Endothelial cell of umbilical vein (primary cell): ENCODE measurements at regions of chr14 and their contacts with region 1.

Region 1: GRCh38 chr14:68458840-68459469 is 333.9 kb downstream of the ZFP36L1 start:
- DNase-seq: peak; percentile 98
- H3K4me3 ChIP-seq: no peak overlapping the region
- H3K27ac ChIP-seq: peak overlapping the region; percentile 85
- H3K4me1 ChIP-seq: peaks cover 30% of the 10 kb centered on the region
- H3K27me3 ChIP-seq: no peaks in the 10 kb centered on the region
- CTCF ChIP-seq: no peak
- POLR2A ChIP-seq: peak; percentile 23

Region 2: GRCh38 chr14:68297876-68298469 is 161.0 kb before region 1 on chr14:
- CTCF ChIA-PET with region 1: interaction called, 14 read pairs
- POLR2A ChIA-PET with region 1: interaction called, 3 read pairs
- dilution Hi-C with region 1: no loop called
- intact Hi-C with region 1: no loop called
- DNase-seq: peak; percentile 58
- H3K4me3 ChIP-seq: no peak overlapping the region
- H3K27ac ChIP-seq: no peak overlapping the region
- H3K4me1 ChIP-seq: peaks cover 10% of the 10 kb centered on the region
- H3K27me3 ChIP-seq: no peaks in the 10 kb centered on the region
- CTCF ChIP-seq: peak; percentile 18 to 43
- POLR2A ChIP-seq: no peak

Region 3: GRCh38 chr14:68552602-68553001 is 93.6 kb after region 1 on chr14:
- CTCF ChIA-PET with region 1: interaction called, 3 read pairs
- POLR2A ChIA-PET with region 1: no interaction called
- dilution Hi-C with region 1: no loop called
- intact Hi-C with region 1: loop called (anchors 1 kb)
- DNase-seq: peak; percentile 72
- H3K4me3 ChIP-seq: no peak overlapping the region
- H3K27ac ChIP-seq: peak overlapping the region; percentile 71
- H3K4me1 ChIP-seq: peaks cover 70% of the 10 kb centered on the region
- H3K27me3 ChIP-seq: no peaks in the 10 kb centered on the region
- CTCF ChIP-seq: no peak
- POLR2A ChIP-seq: peak; percentile 7

Region 4: DNA sequence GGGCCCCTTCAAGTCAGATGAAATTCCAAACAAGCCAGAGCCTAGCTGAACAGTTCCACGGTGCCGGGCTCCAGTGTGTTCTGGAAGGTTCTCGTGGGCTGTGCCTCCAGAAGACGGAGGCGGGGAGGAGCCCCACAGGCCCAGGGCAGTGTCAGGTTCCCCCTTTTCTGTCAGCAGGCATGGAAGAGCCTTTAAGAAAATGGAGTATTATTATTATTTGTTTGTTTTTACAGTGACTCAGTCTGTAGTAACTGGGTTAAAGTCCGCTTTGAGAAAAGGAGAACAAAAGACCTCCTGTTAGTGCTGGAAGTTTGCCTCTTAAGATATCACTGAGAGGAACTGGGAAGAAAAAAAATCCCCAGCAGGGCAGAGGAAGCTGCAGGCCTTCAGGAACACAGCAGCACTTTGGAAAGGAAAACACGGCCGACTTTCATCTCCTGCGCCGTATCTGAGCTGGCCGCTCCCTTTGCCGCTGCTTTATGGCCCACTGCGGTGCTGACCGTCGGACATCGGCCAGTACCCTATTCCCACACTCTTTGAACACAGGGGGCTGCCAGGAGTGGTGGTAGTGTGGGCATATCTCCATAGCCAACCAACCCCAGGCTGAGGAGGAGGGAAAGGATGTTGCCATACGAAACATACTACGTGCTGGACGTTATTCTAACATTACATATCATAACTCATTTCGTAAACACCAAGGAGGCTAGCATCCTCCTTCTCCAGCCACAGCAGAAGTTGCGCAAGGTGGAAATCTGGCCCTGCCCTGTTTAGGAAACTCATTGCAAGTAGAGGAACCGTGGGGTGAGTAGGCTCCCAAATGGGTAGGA is 139.9 kb after region 1 on chr14:
- CTCF ChIA-PET with region 1: no interaction called
- POLR2A ChIA-PET with region 1: no interaction called
- dilution Hi-C with region 1: no loop called
- intact Hi-C with region 1: loop called (anchors 2 kb)
- DNase-seq: peak; percentile 97
- H3K4me3 ChIP-seq: no peak overlapping the region
- H3K27ac ChIP-seq: peak overlapping the region; percentile 82
- H3K4me1 ChIP-seq: peaks cover 24% of the 10 kb centered on the region
- H3K27me3 ChIP-seq: no peaks in the 10 kb centered on the region
- CTCF ChIP-seq: no peak
- POLR2A ChIP-seq: peak; percentile 55

Region 5: GRCh38 chr14:68695326-68695768 is 236.4 kb after region 1 on chr14:
- CTCF ChIA-PET with region 1: no interaction called
- POLR2A ChIA-PET with region 1: no interaction called
- dilution Hi-C with region 1: no loop called
- intact Hi-C with region 1: loop called (anchors 1 kb)
- DNase-seq: peak; percentile 96
- H3K4me3 ChIP-seq: no peak overlapping the region
- H3K27ac ChIP-seq: peak overlapping the region; percentile 80
- H3K4me1 ChIP-seq: peaks cover 26% of the 10 kb centered on the region
- H3K27me3 ChIP-seq: no peaks in the 10 kb centered on the region
- CTCF ChIP-seq: no peak
- POLR2A ChIP-seq: peak; percentile 29

Region 6: DNA sequence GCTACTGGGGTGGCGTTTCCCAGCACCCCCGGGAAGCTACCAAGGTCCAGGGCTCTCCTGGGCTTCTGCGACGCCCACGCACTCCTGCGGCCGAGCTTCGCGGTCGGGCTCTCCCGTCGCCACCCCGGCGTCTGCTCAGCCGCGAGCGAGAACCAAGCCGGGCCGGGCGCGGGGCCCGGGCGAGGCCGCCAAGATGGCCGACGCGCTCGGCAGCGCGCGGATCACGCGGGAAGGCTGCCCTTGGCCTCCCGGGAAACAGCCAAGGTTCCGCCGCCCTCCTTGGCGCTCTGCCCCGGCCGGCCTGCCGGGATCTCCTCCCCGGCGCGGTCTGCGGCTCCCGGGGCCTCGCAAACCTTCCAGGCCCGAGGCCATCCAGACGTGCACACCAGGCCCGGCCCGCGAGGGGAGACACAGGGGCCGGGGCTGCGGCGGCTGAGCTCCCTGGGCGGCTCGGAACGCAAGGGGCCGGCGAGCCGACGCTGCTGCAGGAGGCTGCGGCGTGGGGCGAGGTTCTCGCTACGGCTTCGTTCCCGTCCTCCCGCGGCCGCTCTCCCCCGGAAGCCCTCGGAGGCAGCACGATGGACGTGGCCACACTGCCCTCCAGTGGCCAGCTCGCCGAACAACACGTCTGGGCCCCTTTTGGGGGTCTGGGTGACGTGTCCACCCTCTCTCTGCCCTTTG is 357.4 kb after region 1 on chr14:
- CTCF ChIA-PET with region 1: interaction called, 12 read pairs
- POLR2A ChIA-PET with region 1: interaction called, 3 read pairs
- dilution Hi-C with region 1: no loop called
- intact Hi-C with region 1: no loop called
- DNase-seq: peak; percentile 89
- H3K4me3 ChIP-seq: peak overlapping the region in 1 of 3 experiments; percentile 24
- H3K27ac ChIP-seq: peak overlapping the region; percentile 71
- H3K4me1 ChIP-seq: peaks cover 21% of the 10 kb centered on the region
- H3K27me3 ChIP-seq: no peaks in the 10 kb centered on the region
- CTCF ChIP-seq: peak; percentile 95
- POLR2A ChIP-seq: peak; percentile 46